OCI-LY7 (cell line): ENCODE measurements at regions of chr12 and their contacts with region 1.

Region 1: GRCh38 chr12:80472902-80473500 is 29.0 kb downstream of the PTPRQ start:
- DNase-seq: peak; percentile 69
- H3K4me3 ChIP-seq: no peak overlapping the region
- H3K27ac ChIP-seq: no peak overlapping the region
- H3K4me1 ChIP-seq: no peaks in the 10 kb centered on the region
- CTCF ChIP-seq: peak; percentile 86

Region 2: DNA sequence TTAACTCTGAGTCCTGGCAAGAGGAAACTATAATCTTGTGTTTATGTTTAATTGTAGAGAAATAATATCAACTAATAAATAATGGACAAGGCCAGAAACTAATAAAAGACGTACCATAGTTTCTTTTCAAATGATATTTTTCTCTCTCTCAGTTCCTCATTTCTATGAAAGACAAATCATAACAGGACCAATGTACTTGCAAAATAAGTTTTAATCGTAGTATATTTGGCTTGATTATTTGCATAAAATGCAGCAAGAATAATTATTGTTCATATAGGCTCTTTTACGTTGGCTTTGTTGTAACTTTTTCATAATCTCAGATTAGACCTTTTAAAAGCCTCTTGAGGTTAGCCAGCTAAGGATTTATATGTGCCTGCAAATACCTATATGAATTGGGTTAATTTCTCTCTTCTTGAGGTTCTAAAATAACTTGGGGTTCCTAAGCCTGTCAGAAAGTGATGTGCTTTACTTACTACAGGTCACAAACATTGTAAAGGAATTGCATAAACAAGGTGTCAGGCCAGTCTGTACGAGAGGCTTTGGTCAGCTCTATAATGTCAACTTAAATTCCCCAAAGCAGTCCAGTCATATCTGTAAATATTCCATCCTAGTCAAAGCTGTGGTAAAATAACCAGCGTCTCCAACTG is 181.8 kb before region 1 on chr12:
- CTCF ChIA-PET with region 1: no interaction called
- POLR2A ChIA-PET with region 1: no interaction called
- intact Hi-C with region 1: no loop called
- DNase-seq: no peak
- H3K4me3 ChIP-seq: no peak overlapping the region
- H3K27ac ChIP-seq: no peak overlapping the region
- H3K4me1 ChIP-seq: no peaks in the 10 kb centered on the region
- CTCF ChIP-seq: no peak

Region 3: DNA sequence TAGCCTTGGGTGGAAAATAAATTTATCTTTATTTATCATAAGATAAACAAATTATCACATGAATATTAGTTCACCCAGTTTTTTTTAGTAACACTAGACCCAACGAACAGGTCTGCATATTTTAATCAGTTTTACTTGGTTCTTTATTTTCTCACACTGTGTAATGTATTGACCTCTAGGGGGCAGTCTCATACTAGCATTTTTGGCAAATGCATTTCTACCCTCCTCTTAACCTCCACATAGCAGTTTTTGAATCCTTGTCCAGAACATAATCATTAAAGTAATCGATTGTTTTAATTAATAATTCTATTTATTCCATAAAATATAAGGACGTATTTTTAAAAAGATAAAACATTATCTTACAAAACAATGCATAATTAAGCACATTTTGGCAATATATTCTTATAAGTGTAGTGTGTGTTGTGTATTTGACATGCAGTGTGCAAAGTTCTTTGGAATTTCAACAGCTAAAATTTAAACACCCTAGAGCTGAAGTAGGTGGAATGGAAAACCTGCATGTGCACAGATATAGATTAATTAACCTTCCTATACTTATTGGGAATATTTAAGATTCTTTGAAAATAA is 60.5 kb before region 1 on chr12:
- CTCF ChIA-PET with region 1: no interaction called
- POLR2A ChIA-PET with region 1: no interaction called
- intact Hi-C with region 1: no loop called
- DNase-seq: peak; percentile 67
- H3K4me3 ChIP-seq: no peak overlapping the region
- H3K27ac ChIP-seq: no peak overlapping the region
- H3K4me1 ChIP-seq: no peaks in the 10 kb centered on the region
- CTCF ChIP-seq: peak; percentile 96

Region 4: GRCh38 chr12:80598004-80598606 is 125.1 kb after region 1 on chr12:
- CTCF ChIA-PET with region 1: no interaction called
- POLR2A ChIA-PET with region 1: no interaction called
- intact Hi-C with region 1: loop called (anchors 2 kb)
- DNase-seq: peak; percentile 53
- H3K4me3 ChIP-seq: no peak overlapping the region
- H3K27ac ChIP-seq: no peak overlapping the region
- H3K4me1 ChIP-seq: no peaks in the 10 kb centered on the region
- CTCF ChIP-seq: peak; percentile 84

Region 5: GRCh38 chr12:80763874-80764273 is 290.9 kb after region 1 on chr12:
- CTCF ChIA-PET with region 1: no interaction called
- POLR2A ChIA-PET with region 1: no interaction called
- intact Hi-C with region 1: loop called (anchors 5 kb)
- DNase-seq: peak; percentile 59
- H3K4me3 ChIP-seq: no peak overlapping the region
- H3K27ac ChIP-seq: no peak overlapping the region
- H3K4me1 ChIP-seq: peaks cover 18% of the 10 kb centered on the region
- CTCF ChIP-seq: peak; percentile 86